ENCODE measurements at regions of chr1 and their contacts with region 1.

Region 1: GRCh38 chr1:112955781-112956543 is at the start of gene SLC16A1:
- DNase-seq: peak; percentile 94
- ATAC-seq: peak; percentile 84
- H3K4me3 ChIP-seq: peak within 1 kb of the TSS; percentile 53 to 97 (median 88)
- H3K4me3 Mint-ChIP-seq: peak within 1 kb of the TSS; percentile 99
- H3K27ac ChIP-seq: peak within 1 kb of the TSS; percentile 88 to 92
- H3K27ac Mint-ChIP-seq: peak within 1 kb of the TSS; percentile 99
- H3K4me1 ChIP-seq: peaks cover 26 to 30% of the 10 kb centered on the region in 2 donors
- H3K4me1 Mint-ChIP-seq: peaks cover 48% of the 10 kb centered on the region
- H3K27me3 ChIP-seq: no peaks in the 10 kb centered on the region
- H3K27me3 Mint-ChIP-seq: no peaks in the 10 kb centered on the region
- CTCF ChIP-seq: no peak
- total RNA-seq, gene SLC16A1: 13.0 and 15.8 TPM in 2 replicates

Region 2: GRCh38 chr1:112390775-112391602 is 565.0 kb before region 1 on chr1:
- CTCF ChIA-PET with region 1: interaction called, 5 read pairs
- POLR2A ChIA-PET with region 1: no interaction called
- intact Hi-C with region 1: loop called (anchors 5 kb)
- DNase-seq: peak; percentile 90
- ATAC-seq: peak; percentile 92
- H3K4me3 ChIP-seq: peak overlapping the region in 1 of 5 experiments; percentile 17
- H3K4me3 Mint-ChIP-seq: peak overlapping the region; percentile 13
- H3K27ac ChIP-seq: no peak overlapping the region
- H3K27ac Mint-ChIP-seq: peak overlapping the region; percentile 15
- H3K4me1 ChIP-seq: peaks cover 17 to 21% of the 10 kb centered on the region in 2 donors
- H3K4me1 Mint-ChIP-seq: peaks cover 24% of the 10 kb centered on the region
- H3K27me3 ChIP-seq: peaks cover 0 to 12% (median 0%) of the 10 kb centered on the region in 4 experiments
- H3K27me3 Mint-ChIP-seq: peaks cover 13% of the 10 kb centered on the region
- CTCF ChIP-seq: peak; percentile 96

Region 3: GRCh38 chr1:112706908-112707663 is 248.9 kb before region 1 on chr1 and contains the start of gene RHOC:
- CTCF ChIA-PET with region 1: no interaction called
- POLR2A ChIA-PET with region 1: no interaction called
- intact Hi-C with region 1: loop called (anchors 2 kb)
- DNase-seq: peak; percentile 81
- ATAC-seq: peak; percentile 85
- H3K4me3 ChIP-seq: peak within 1 kb of the TSS in 4 of 5 experiments; percentile 56 to 74 (median 66)
- H3K4me3 Mint-ChIP-seq: peak within 1 kb of the TSS; percentile 88
- H3K27ac ChIP-seq: peak within 1 kb of the TSS in 1 of 2 donors; percentile 49
- H3K27ac Mint-ChIP-seq: peak within 1 kb of the TSS; percentile 81
- H3K4me1 ChIP-seq: peaks cover 34 to 46% of the 10 kb centered on the region in 2 donors
- H3K4me1 Mint-ChIP-seq: peaks cover 50% of the 10 kb centered on the region
- H3K27me3 ChIP-seq: no peaks in the 10 kb centered on the region
- H3K27me3 Mint-ChIP-seq: no peaks in the 10 kb centered on the region
- CTCF ChIP-seq: peak; percentile 72
- total RNA-seq, gene RHOC: 18.5 and 21.0 TPM in 2 replicates

Region 4: GRCh38 chr1:112971006-112971405 is 15.0 kb after region 1 on chr1:
- CTCF ChIA-PET with region 1: no interaction called
- POLR2A ChIA-PET with region 1: no interaction called
- intact Hi-C with region 1: no loop called
- DNase-seq: no peak
- ATAC-seq: no peak
- H3K4me3 ChIP-seq: no peak overlapping the region
- H3K4me3 Mint-ChIP-seq: no peak overlapping the region
- H3K27ac ChIP-seq: no peak overlapping the region
- H3K27ac Mint-ChIP-seq: no peak overlapping the region
- H3K4me1 ChIP-seq: no peaks in the 10 kb centered on the region
- H3K4me1 Mint-ChIP-seq: no peaks in the 10 kb centered on the region
- H3K27me3 ChIP-seq: no peaks in the 10 kb centered on the region
- H3K27me3 Mint-ChIP-seq: no peaks in the 10 kb centered on the region
- CTCF ChIP-seq: no peak

Region 5: GRCh38 chr1:113042285-113043143 is 86.6 kb after region 1 on chr1:
- CTCF ChIA-PET with region 1: interaction called, 8 read pairs
- POLR2A ChIA-PET with region 1: no interaction called
- intact Hi-C with region 1: loop called (anchors 1 kb)
- DNase-seq: peak; percentile 65
- ATAC-seq: peak; percentile 73
- H3K4me3 ChIP-seq: no peak overlapping the region
- H3K4me3 Mint-ChIP-seq: no peak overlapping the region
- H3K27ac ChIP-seq: no peak overlapping the region
- H3K27ac Mint-ChIP-seq: no peak overlapping the region
- H3K4me1 ChIP-seq: peaks cover 5 to 12% of the 10 kb centered on the region in 2 donors
- H3K4me1 Mint-ChIP-seq: peaks cover 11% of the 10 kb centered on the region
- H3K27me3 ChIP-seq: peaks cover 0 to 3% (median 0%) of the 10 kb centered on the region in 4 experiments
- H3K27me3 Mint-ChIP-seq: peaks cover 3% of the 10 kb centered on the region
- CTCF ChIP-seq: peak; percentile 32

Region 6: DNA sequence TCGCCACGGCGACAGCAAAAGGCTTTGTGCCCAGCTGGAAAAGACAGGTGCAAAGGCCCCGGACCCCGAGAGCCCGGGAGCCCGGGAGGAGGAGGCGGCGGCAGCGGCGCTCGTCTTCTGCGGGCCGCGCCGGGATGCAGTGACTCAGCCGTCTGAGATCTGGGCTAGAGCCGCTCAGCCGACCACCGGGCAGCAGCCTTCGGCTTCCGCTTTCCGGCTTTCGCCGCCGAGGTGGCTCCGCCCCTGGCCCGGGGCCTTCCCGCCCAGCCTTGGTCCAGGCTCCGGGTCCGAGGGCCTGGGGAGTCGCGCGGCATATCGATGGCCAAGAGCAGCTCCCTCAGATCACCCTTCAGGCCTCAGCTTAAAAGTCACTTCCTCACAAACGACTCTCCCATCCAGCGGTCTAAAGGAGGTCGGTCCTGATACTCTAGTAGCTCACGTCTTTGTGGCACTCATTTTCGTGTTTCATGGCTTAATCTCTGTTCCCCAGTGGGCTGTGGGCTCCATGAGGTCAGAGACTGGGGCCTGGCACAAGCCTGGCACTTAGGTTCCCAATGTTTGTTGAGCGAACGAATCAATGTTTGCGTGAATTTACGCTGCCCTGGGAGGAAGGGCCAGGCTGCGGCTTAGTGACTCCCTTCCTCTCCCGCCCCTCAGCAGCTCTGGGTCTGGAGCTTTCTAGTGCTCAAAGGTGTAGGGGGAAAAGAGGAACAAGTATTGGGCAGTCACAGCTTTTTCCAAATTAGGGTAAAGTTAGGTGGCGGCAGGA is 803.6 kb after region 1 on chr1 and contains the start of gene PHTF1:
- CTCF ChIA-PET with region 1: no interaction called
- POLR2A ChIA-PET with region 1: no interaction called
- intact Hi-C with region 1: loop called (anchors 5 kb)
- DNase-seq: peak; percentile 80
- ATAC-seq: peak; percentile 84
- H3K4me3 ChIP-seq: peak within 1 kb of the TSS; percentile 76 to 93 (median 92)
- H3K4me3 Mint-ChIP-seq: peak within 1 kb of the TSS; percentile 99
- H3K27ac ChIP-seq: peak within 1 kb of the TSS; percentile 86 to 90
- H3K27ac Mint-ChIP-seq: peak within 1 kb of the TSS; percentile 99
- H3K4me1 ChIP-seq: peaks cover 6 to 20% of the 10 kb centered on the region in 2 donors
- H3K4me1 Mint-ChIP-seq: peaks cover 23% of the 10 kb centered on the region
- H3K27me3 ChIP-seq: no peaks in the 10 kb centered on the region
- H3K27me3 Mint-ChIP-seq: no peaks in the 10 kb centered on the region
- CTCF ChIP-seq: no peak
- total RNA-seq, gene PHTF1: 18.5 and 25.7 TPM in 2 replicates

Region 7: GRCh38 chr1:113928941-113929749 is 973.2 kb after region 1 on chr1 and contains the start of gene HIPK1:
- CTCF ChIA-PET with region 1: no interaction called
- POLR2A ChIA-PET with region 1: no interaction called
- intact Hi-C with region 1: loop called (anchors 2 kb)
- DNase-seq: peak; percentile 96
- ATAC-seq: peak; percentile 75
- H3K4me3 ChIP-seq: peak within 1 kb of the TSS; percentile 76 to 92 (median 86)
- H3K4me3 Mint-ChIP-seq: peak within 1 kb of the TSS; percentile 100
- H3K27ac ChIP-seq: peak within 1 kb of the TSS; percentile 98 to 99
- H3K27ac Mint-ChIP-seq: peak within 1 kb of the TSS; percentile 100
- H3K4me1 ChIP-seq: peaks cover 33 to 35% of the 10 kb centered on the region in 2 donors
- H3K4me1 Mint-ChIP-seq: peaks cover 49% of the 10 kb centered on the region
- H3K27me3 ChIP-seq: no peaks in the 10 kb centered on the region
- H3K27me3 Mint-ChIP-seq: no peaks in the 10 kb centered on the region
- CTCF ChIP-seq: no peak
- total RNA-seq, gene HIPK1: 48.0 and 48.2 TPM in 2 replicates

Region 8: GRCh38 chr1:114716304-114717170 is 1760.6 kb after region 1 on chr1 and contains the start of gene NRAS:
- CTCF ChIA-PET with region 1: no interaction called
- POLR2A ChIA-PET with region 1: no interaction called
- intact Hi-C with region 1: loop called (anchors 10 kb)
- DNase-seq: peak; percentile 96
- ATAC-seq: peak; percentile 96
- H3K4me3 ChIP-seq: peak within 1 kb of the TSS; percentile 69 to 95 (median 89)
- H3K4me3 Mint-ChIP-seq: peak within 1 kb of the TSS; percentile 99
- H3K27ac ChIP-seq: peak within 1 kb of the TSS; percentile 97
- H3K27ac Mint-ChIP-seq: peak within 1 kb of the TSS; percentile 99
- H3K4me1 ChIP-seq: peaks cover 15 to 16% of the 10 kb centered on the region in 2 donors
- H3K4me1 Mint-ChIP-seq: peaks cover 29% of the 10 kb centered on the region
- H3K27me3 ChIP-seq: no peaks in the 10 kb centered on the region
- H3K27me3 Mint-ChIP-seq: no peaks in the 10 kb centered on the region
- CTCF ChIP-seq: no peak
- total RNA-seq, gene NRAS: 35.0 and 35.3 TPM in 2 replicates